ENCODE measurements at regions of chr1 and their contacts with region 1.

Region 1: GRCh38 chr1:19643602-19644394 is at the start of gene NBL1:
- DNase-seq: no peak
- H3K4me3 ChIP-seq: peak within 1 kb of the TSS; percentile 71 to 79 (median 75)
- H3K27ac ChIP-seq: peak within 1 kb of the TSS; percentile 74
- H3K4me1 ChIP-seq: peaks cover 61% of the 10 kb centered on the region
- H3K27me3 ChIP-seq: no peaks in the 10 kb centered on the region
- CTCF ChIP-seq: no peak
- polyA plus RNA-seq, gene NBL1: 44.6 to 114 TPM (median 74.5 TPM) in 3 replicates

Region 2: GRCh38 chr1:18998016-18998724 is 645.6 kb before region 1 on chr1:
- dilution Hi-C with region 1: no loop called
- DNase-seq: peak; percentile 62
- H3K4me3 ChIP-seq: no peak overlapping the region
- H3K27ac ChIP-seq: peak overlapping the region; percentile 36
- H3K4me1 ChIP-seq: peaks cover 21% of the 10 kb centered on the region
- H3K27me3 ChIP-seq: no peaks in the 10 kb centered on the region
- CTCF ChIP-seq: no peak

Region 3: DNA sequence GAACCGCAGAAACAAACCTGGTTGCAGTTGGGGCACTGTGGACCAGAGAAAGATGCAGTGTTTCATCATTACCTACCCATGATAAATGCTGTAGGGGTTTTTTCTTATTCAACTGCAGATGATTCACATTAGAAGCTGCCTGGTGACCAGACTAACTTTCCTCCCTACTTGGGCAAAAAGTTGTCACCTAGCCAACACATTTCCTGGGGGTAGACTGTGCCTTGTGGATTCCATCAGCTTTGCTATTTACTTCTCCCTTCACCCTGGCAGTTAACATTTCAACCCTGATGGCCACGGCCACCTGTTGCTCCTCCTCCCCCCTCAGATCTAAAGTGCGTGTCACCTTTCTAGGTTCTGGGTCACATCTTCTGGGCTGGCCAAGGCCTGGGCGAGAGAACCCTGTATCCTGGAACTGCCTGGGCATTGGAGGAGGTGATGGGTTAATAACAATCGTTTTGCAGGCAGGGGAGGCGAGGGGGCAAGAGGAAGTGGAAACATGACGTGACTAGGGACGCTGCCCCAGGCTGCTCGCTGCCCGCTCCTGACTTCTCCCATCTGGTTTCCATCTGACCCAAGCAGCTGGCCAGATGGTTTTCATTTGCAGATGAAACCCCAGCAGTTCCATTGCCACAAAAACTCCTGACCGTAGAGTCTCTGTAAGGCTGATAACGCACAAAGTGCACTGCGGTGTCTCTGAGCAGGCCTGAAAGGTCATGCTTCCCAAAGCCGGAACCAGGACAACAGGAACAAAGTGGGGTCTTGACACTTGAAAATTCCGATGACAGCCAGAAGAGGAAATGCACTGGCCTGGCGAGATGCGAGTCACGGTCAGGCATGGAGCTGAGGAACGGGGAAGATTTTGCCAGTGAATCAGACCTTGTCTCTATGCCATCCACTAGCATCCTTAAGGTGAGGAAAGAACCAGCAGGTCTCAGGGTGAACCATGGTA is 195.0 kb before region 1 on chr1:
- dilution Hi-C with region 1: loop called (anchors 25 kb)
- DNase-seq: no peak
- H3K4me3 ChIP-seq: no peak overlapping the region
- H3K27ac ChIP-seq: peak overlapping the region; percentile 27
- H3K4me1 ChIP-seq: peaks cover 47% of the 10 kb centered on the region
- H3K27me3 ChIP-seq: no peaks in the 10 kb centered on the region
- CTCF ChIP-seq: no peak

Region 4: GRCh38 chr1:19882111-19883071 is 238.6 kb after region 1 on chr1 and contains the start of gene OTUD3:
- dilution Hi-C with region 1: no loop called
- DNase-seq: peak; percentile 88
- H3K4me3 ChIP-seq: peak within 1 kb of the TSS; percentile 64 to 91 (median 81)
- H3K27ac ChIP-seq: peak within 1 kb of the TSS; percentile 73
- H3K4me1 ChIP-seq: peaks cover 31% of the 10 kb centered on the region
- H3K27me3 ChIP-seq: no peaks in the 10 kb centered on the region
- CTCF ChIP-seq: peak; percentile 80 to 85 (median 85)
- polyA plus RNA-seq, gene OTUD3: 4.1 to 7.0 TPM (median 5.5 TPM) in 3 replicates